ENCODE measurements at regions of chr4 and their contacts with region 1.

Region 1: DNA sequence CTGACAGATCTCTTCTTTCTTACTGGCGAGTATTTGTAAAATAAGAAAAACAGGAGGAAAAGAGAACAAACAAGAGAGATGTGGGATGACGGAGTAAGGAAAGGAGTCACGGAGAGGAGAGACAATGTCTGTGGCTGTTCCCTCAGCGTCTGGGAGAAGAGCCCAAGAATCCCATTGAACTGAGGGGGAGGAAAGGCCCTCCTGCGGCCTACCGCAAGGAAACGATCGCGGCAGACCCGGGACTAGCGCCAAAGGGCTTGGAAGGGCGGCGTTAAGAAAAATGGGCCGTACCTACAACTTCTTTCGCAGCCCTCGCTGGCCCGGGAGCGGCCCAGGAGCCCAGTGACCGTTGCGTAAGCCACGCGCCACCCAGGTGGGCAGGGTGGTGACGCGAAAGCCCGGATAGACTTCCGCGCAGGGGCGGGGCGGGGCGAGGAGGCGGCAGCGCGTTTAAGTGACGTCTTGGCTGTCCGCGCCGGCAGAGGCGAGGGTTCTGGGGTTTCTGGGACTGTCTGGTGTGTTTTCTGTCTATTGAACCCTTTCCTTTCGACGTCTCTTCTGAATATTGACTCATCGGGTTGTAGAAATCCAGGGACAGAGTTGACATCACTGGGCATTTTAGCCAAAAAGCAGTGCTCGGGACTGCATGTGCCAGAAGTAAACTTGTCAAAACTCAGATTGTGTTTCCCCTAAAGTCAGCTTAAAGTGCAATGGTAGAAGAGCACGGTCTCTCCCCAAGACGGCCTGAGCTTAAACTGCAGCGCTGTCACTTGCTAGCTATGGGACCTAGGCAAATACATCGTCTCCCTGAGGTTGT is at the start of gene SLC9B1:
- DNase-seq: peak; percentile 98
- ATAC-seq: peak; percentile 100
- H3K4me3 ChIP-seq: no peak within 1 kb of the TSS
- H3K4me1 ChIP-seq: peaks cover 8% of the 10 kb centered on the region
- CTCF ChIP-seq: no peak
- total RNA-seq, gene SLC9B1: 0.65 to 1.4 TPM in 2 of 3 donors, not detected in the other

Region 2: GRCh38 chr4:102620697-102621497 is 398.6 kb before region 1 on chr4:
- intact Hi-C with region 1: loop called in 1 of 2 experiments (anchors 10 kb)
- DNase-seq: peak in 1 of 3 donors; percentile 62
- ATAC-seq: peak; percentile 92
- H3K4me3 ChIP-seq: no peak overlapping the region
- H3K4me1 ChIP-seq: peaks cover 4% of the 10 kb centered on the region
- CTCF ChIP-seq: no peak

Region 3: DNA sequence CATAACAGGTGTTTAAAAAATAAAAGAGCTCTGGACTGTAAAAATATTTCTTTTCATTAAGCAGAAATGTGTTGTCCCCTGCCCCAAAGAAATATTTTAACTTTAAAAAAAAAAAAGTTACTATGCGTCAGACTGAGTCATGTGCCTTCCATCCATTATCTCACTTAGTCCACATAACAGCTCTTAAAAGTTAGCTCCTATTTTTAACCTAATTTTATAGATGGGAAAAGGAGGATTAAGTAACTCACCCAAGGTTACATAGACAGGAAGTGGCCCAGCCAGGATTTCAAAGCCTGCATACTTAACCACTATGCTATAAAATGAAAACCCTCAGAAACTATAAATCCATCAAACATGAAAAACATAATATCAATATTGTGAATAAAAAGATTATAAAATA is 356.4 kb before region 1 on chr4:
- intact Hi-C with region 1: no loop called
- DNase-seq: no peak
- ATAC-seq: no peak
- H3K4me3 ChIP-seq: no peak overlapping the region
- H3K4me1 ChIP-seq: no peaks in the 10 kb centered on the region
- CTCF ChIP-seq: no peak

Region 4: GRCh38 chr4:102687373-102687981 is 332.0 kb before region 1 on chr4:
- intact Hi-C with region 1: no loop called
- DNase-seq: no peak
- ATAC-seq: peak; percentile 35
- H3K4me3 ChIP-seq: no peak overlapping the region
- H3K4me1 ChIP-seq: no peaks in the 10 kb centered on the region
- CTCF ChIP-seq: no peak

Region 5: DNA sequence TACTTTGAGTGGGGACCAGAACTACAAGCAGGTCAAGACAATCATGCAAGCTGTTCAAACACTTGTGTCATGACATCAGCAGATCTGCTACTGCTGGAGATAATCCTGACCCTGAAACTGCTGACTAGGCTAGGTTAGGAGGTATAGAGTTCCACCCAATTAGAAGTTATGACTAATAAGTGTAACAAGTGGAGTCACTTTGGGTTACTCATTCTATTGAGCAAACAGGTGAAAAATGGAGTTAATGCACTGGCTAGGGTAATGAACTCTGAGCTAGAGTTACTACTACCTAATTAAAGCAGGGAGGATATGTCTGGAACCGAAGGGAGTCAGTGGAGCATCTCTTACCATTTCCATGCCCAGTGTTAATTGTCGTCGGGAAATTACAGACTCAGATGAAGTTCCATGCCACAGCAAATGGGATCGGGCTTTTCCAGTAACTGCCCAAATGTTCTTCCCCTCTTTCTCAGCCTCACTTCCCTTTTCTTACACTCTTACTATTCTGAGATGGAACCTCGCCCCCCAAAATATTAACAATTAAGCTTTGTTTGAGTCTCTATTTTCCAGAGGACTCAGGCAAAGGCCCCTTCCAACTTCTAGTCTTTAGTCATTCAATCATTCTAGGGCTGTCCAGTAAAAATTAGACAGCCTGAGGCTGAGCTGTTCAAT is 238.9 kb before region 1 on chr4:
- intact Hi-C with region 1: no loop called
- DNase-seq: no peak
- ATAC-seq: peak; percentile 38
- H3K4me3 ChIP-seq: no peak overlapping the region
- H3K4me1 ChIP-seq: no peaks in the 10 kb centered on the region
- CTCF ChIP-seq: no peak